CD4-positive, alpha-beta memory T cell (primary cell): ENCODE measurements at regions of chrX and their contacts with region 1.

Region 1: DNA sequence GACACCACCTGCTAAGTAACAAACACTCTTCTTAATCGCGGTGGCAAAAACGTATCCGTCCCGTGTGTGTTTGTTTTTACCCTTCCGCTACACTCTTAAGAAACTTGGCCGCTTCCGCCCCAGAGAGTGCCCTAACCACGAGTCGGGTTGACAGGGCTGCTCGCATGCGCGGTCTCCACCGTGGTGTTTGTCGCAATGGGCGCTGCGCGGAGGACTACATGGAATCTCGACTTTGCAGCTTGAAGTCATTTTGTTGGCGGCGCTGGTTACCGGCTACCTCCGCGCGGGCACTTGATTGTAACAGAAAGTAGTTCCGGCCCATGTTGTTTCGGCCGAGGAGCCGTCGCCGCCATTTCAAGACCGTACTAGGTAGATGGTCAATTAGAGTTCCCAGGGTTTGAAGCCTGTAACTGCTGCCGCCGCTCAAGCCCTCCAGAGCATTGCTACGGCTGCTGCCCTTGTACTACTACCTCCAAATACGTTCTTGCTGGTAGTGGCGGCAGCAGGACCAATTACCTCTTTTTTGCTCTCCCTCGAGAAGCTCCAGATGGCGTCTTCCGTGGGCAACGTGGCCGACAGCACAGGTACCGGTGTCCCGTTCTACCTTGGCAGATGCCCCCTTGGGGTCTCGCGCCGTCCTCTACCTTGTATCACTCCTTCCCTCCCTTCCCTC is at the start of gene OGT:
- DNase-seq: peak; percentile 89 to 95 (median 94)
- H3K4me3 ChIP-seq: peak within 1 kb of the TSS; percentile 79 to 94
- H3K4me3 Mint-ChIP-seq: peak within 1 kb of the TSS; percentile 95 to 99 (median 98)
- H3K27ac ChIP-seq: peak within 1 kb of the TSS; percentile 89
- H3K27ac Mint-ChIP-seq: peak within 1 kb of the TSS; percentile 97 to 99 (median 97)
- H3K4me1 ChIP-seq: peaks cover 21% of the 10 kb centered on the region
- H3K4me1 Mint-ChIP-seq: peaks cover 12 to 53% (median 25%) of the 10 kb centered on the region in 4 donors
- H3K27me3 ChIP-seq: no peaks in the 10 kb centered on the region
- H3K27me3 Mint-ChIP-seq: no peaks in the 10 kb centered on the region
- total RNA-seq, gene OGT: 515 to 525 TPM

Region 2: DNA sequence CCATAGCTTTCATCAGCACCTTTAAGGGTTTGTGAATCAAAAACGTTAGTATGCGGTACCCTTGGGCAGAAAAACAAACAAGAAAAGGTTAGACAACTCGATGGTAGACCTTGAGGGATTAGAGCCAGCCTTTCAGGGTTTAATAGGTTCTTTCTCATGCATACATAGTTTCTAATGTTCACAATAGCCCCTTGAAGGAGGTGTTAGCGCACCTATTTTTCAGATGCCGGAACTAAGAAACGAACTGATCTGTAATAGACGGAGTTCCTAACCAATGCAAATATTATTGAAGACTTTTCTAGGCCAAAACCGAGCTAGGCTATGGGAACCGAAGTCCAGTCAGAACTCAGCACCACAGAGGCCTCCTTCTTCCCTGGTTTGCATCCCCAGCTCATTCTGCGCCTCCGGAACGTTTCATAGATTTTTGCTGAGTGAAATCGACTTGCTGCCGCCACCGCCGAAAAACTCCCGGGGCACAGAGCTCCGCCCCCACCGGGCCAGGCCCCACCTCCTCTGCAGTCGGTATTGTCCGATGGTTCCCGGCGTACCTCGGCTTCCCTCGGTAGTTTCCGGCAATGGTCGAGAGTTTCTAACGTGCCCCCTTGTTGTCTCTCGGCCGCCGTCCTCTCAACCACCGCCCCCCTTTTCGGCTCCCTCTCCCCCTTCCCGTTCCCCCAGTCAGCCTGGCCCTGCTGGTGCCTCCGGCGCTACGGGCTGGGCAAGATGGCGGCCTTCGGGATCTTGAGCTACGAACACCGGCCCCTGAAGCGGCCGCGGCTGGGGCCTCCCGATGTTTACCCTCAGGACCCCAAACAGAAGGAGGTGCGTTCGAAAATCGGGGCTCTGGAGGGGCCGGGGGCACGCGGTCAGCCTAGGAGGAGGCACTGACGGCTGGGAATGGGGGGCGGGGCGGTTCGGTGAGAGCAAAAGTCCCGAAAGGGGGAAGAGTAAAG is 414.6 kb before region 1 on chrX and contains the start of gene MED12:
- CTCF ChIA-PET with region 1: no interaction called
- POLR2A ChIA-PET with region 1: interaction called, 4 read pairs
- intact Hi-C with region 1: loop called (anchors 10 kb)
- DNase-seq: peak; percentile 75 to 83 (median 78)
- H3K4me3 ChIP-seq: peak within 1 kb of the TSS; percentile 36 to 69
- H3K4me3 Mint-ChIP-seq: peak within 1 kb of the TSS; percentile 84 to 90 (median 89)
- H3K27ac ChIP-seq: peak within 1 kb of the TSS; percentile 88
- H3K27ac Mint-ChIP-seq: peak within 1 kb of the TSS; percentile 90 to 95 (median 95)
- H3K4me1 ChIP-seq: peaks cover 26% of the 10 kb centered on the region
- H3K4me1 Mint-ChIP-seq: peaks cover 15 to 47% (median 29%) of the 10 kb centered on the region in 4 donors
- H3K27me3 ChIP-seq: no peaks in the 10 kb centered on the region
- H3K27me3 Mint-ChIP-seq: no peaks in the 10 kb centered on the region
- total RNA-seq, gene MED12: 84.4 to 89.9 TPM

Region 3: GRCh38 chrX:71283403-71284143 is 249.3 kb before region 1 on chrX and contains the start of gene NONO:
- CTCF ChIA-PET with region 1: no interaction called
- POLR2A ChIA-PET with region 1: interaction called, 25 read pairs
- intact Hi-C with region 1: loop called (anchors 1 kb)
- DNase-seq: peak; percentile 86 to 95 (median 92)
- H3K4me3 ChIP-seq: peak within 1 kb of the TSS; percentile 62 to 63
- H3K4me3 Mint-ChIP-seq: peak within 1 kb of the TSS; percentile 96 to 100 (median 98)
- H3K27ac ChIP-seq: peak within 1 kb of the TSS; percentile 95
- H3K27ac Mint-ChIP-seq: peak within 1 kb of the TSS; percentile 97 to 100 (median 99)
- H3K4me1 ChIP-seq: peaks cover 34% of the 10 kb centered on the region
- H3K4me1 Mint-ChIP-seq: peaks cover 7 to 42% (median 13%) of the 10 kb centered on the region in 4 donors
- H3K27me3 ChIP-seq: no peaks in the 10 kb centered on the region
- H3K27me3 Mint-ChIP-seq: no peaks in the 10 kb centered on the region
- total RNA-seq, gene NONO: 300 to 314 TPM

Region 4: DNA sequence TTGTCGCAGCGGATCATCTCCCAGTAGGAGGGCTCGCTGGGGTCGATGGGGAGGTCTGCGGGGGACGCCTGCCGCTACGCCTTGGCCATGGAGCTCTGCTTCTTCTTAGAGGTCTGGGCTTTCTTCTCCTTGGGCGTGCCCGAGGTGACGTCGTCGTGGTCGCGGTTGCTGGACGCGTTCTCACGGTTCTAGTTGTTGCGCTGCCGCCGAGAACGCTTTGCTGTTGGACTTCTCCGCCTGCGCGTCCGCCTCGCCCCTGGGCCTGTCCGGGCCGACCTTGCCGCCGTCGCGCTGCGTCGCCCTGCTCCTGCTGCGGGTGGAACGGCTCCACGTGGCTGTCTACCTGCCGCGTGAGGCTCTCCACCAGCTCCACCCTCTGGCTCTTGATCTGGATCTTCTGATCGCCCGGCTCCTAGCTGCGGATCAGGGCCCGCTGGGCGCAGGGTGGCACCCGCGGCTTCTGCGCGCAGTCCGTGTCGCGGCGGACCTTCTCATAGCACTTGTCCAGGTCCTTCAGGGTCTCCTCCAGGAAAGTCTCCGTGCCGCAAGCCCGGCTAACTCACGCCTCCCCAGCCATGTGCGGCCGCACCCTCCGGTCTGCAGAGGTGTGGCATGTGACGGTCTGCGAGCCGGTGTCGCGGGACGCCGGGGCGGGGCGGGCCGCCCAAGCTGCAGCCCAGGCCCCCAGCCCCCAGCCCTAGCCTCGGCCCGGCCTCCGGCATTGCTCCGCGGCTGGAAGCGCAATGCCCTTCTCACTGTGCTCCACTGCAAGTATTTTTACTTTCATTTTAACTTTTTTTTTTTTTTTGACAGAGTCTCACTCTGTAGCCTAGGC is 40.4 kb before region 1 on chrX:
- CTCF ChIA-PET with region 1: interaction called, 3 read pairs
- POLR2A ChIA-PET with region 1: interaction called, 50 read pairs
- intact Hi-C with region 1: loop called (anchors 1 kb)
- DNase-seq: peak; percentile 45 to 49 (median 48)
- H3K4me3 ChIP-seq: peak overlapping the region in 1 of 2 donors; percentile 64
- H3K4me3 Mint-ChIP-seq: peak overlapping the region; percentile 65 to 87 (median 84)
- H3K27ac ChIP-seq: peak overlapping the region; percentile 43
- H3K27ac Mint-ChIP-seq: peak overlapping the region; percentile 42 to 93 (median 85)
- H3K4me1 ChIP-seq: peaks cover 8% of the 10 kb centered on the region
- H3K4me1 Mint-ChIP-seq: peaks cover 4 to 8% (median 4%) of the 10 kb centered on the region in 4 donors
- H3K27me3 ChIP-seq: no peaks in the 10 kb centered on the region
- H3K27me3 Mint-ChIP-seq: peaks cover 0 to 1% of the 10 kb centered on the region in 2 donors

Region 5: DNA sequence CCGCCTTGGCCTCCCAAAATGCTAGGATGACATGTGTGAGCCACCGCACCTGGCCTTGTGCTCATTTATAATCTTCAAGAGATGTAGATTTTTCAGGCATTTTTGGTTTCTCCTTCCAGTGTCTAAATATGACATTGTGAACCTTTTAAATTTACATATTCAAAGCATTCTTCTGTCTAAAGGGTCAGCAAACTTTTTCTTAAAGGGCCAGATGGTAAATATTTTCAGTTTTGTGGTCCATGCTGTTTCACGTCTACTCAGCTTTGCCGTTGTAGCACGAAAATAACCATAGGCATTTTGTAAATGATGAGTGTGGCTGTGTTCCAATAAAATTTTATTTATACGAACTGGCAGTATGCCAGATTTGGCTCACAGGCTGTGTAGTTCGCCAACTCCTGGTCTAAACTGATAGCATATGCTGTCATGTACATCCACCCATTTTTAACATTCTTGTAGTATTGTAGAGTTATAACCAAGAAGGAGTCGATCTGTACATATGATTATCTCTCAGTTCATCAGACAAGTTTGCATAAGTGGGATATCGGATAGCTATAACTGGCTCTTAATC is 32.7 kb after region 1 on chrX:
- CTCF ChIA-PET with region 1: interaction called, 4 read pairs
- POLR2A ChIA-PET with region 1: interaction called, 12 read pairs
- intact Hi-C with region 1: no loop called
- DNase-seq: no peak
- H3K4me3 ChIP-seq: no peak overlapping the region
- H3K4me3 Mint-ChIP-seq: no peak overlapping the region
- H3K27ac ChIP-seq: no peak overlapping the region
- H3K27ac Mint-ChIP-seq: no peak overlapping the region
- H3K4me1 ChIP-seq: no peaks in the 10 kb centered on the region
- H3K4me1 Mint-ChIP-seq: peaks cover 0 to 6% (median 3%) of the 10 kb centered on the region in 4 donors
- H3K27me3 ChIP-seq: no peaks in the 10 kb centered on the region
- H3K27me3 Mint-ChIP-seq: no peaks in the 10 kb centered on the region

Region 6: DNA sequence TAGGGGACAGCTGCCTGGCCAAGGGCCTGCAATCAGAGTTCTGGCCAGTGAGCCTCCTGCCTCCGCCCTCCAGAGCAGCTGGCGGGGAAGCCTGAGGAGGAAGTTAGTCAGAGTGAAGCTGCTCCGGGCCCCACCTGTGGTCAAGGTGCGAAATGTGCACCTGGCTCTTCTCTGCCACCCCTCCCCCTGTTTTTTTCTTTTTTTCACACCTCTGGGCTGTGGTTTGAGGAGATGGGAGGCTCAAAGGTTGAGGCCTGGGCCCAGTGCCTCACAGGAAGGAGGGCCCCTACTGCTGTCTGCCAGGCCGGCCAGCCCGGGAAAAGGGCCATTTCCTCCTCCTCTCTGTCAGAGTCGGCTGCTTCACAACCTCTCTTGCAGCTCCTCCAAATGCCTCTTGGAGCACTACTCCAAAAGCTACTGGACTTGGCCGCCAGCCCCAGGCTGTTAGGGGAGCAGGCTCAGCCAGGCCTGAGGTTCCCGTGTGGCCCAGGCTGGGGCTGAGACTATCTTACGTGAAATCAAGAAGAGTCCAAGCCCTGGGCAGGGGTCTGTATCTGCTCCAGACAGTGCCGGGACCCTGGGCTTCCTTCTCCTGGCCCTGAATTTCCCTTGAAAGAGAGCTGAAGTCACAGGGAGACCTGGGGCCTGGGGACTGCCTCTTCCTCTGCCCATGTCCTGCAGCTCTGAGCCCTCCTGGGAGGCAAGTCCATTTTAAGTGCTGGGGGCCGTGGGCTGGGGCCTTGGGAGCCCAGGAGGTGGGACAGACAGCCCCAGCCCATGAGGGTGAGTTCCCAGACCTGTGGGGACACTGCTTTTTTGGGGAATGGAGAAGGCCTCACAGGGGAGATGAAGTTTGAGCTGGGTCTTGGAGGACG is 89.9 kb after region 1 on chrX:
- CTCF ChIA-PET with region 1: interaction called, 3 read pairs
- POLR2A ChIA-PET with region 1: interaction called, 50 read pairs
- intact Hi-C with region 1: loop called (anchors 1 kb)
- DNase-seq: peak; percentile 81 to 89 (median 82)
- H3K4me3 ChIP-seq: peak overlapping the region in 1 of 2 donors; percentile 28
- H3K4me3 Mint-ChIP-seq: peak overlapping the region; percentile 69 to 87 (median 80)
- H3K27ac ChIP-seq: peak overlapping the region; percentile 75
- H3K27ac Mint-ChIP-seq: peak overlapping the region; percentile 91 to 97 (median 96)
- H3K4me1 ChIP-seq: peaks cover 82% of the 10 kb centered on the region
- H3K4me1 Mint-ChIP-seq: peaks cover 27 to 73% (median 61%) of the 10 kb centered on the region in 4 donors
- H3K27me3 ChIP-seq: no peaks in the 10 kb centered on the region
- H3K27me3 Mint-ChIP-seq: peaks cover 0 to 2% of the 10 kb centered on the region in 2 donors